Ovary (tissue), 10 donors: ENCODE measurements at regions of chr6 and their contacts with region 1.

Region 1: DNA sequence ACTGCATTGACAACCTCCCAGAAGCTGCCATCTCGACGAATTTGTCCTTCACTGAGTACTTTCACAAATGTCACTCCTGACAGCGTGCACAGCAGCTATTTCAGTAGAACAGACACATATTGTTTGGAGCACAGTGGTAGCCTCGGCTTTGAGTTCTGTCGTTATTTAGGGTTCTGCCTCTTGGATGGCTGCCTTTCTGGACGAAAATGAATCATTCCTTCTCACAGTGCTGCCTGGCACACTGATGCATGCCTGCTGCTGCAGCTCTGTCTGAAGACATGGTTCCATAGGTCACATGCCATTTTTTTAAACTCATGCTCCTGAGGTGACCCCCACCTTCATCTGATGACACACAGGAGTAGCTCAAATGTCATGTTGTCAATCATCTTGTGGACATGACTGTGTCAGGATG is 477.0 kb downstream of the C6orf118 start:
- DNase-seq: no peak
- H3K4me3 ChIP-seq: no peak overlapping the region
- H3K27ac ChIP-seq: no peak overlapping the region
- H3K4me1 ChIP-seq: no peaks in the 10 kb centered on the region
- H3K27me3 ChIP-seq: no peaks in the 10 kb centered on the region
- CTCF ChIP-seq: no peak
- EP300 ChIP-seq: no peak
- POLR2A ChIP-seq: no peak

Region 2: GRCh38 chr6:164612751-164613150 is 219.7 kb before region 1 on chr6:
- intact Hi-C with region 1: loop called in 1 of 4 experiments (anchors 5 kb)
- DNase-seq: no peak
- H3K4me3 ChIP-seq: no peak overlapping the region
- H3K27ac ChIP-seq: no peak overlapping the region
- H3K4me1 ChIP-seq: no peaks in the 10 kb centered on the region
- H3K27me3 ChIP-seq: no peaks in the 10 kb centered on the region
- CTCF ChIP-seq: no peak
- EP300 ChIP-seq: no peak
- POLR2A ChIP-seq: no peak

Region 3: GRCh38 chr6:164897523-164898235 is 65.2 kb after region 1 on chr6:
- intact Hi-C with region 1: no loop called
- DNase-seq: no peak
- H3K4me3 ChIP-seq: no peak overlapping the region
- H3K27ac ChIP-seq: no peak overlapping the region
- H3K4me1 ChIP-seq: no peaks in the 10 kb centered on the region
- H3K27me3 ChIP-seq: no peaks in the 10 kb centered on the region
- CTCF ChIP-seq: no peak
- EP300 ChIP-seq: no peak
- POLR2A ChIP-seq: no peak

Region 4: GRCh38 chr6:165850434-165851019 is 1018.1 kb after region 1 on chr6:
- intact Hi-C with region 1: no loop called
- DNase-seq: peak; percentile 60 to 88 (median 82)
- H3K4me3 ChIP-seq: peak overlapping the region; percentile 9
- H3K27ac ChIP-seq: no peak overlapping the region
- H3K4me1 ChIP-seq: peaks cover 5% of the 10 kb centered on the region
- H3K27me3 ChIP-seq: no peaks in the 10 kb centered on the region
- CTCF ChIP-seq: peak; percentile 87 to 89 (median 87)
- EP300 ChIP-seq: no peak
- POLR2A ChIP-seq: no peak